Naive thymus-derived CD4-positive, alpha-beta T cell (primary cell): ENCODE measurements at regions of chr16 and their contacts with region 1.

Region 1: GRCh38 chr16:60729051-60729450 is 1307.2 kb downstream of the CDH8 start:
- DNase-seq: no peak
- ATAC-seq: no peak
- H3K4me3 ChIP-seq: no peak overlapping the region
- H3K4me3 Mint-ChIP-seq: no peak overlapping the region
- H3K27ac ChIP-seq: no peak overlapping the region
- H3K27ac Mint-ChIP-seq: no peak overlapping the region
- H3K4me1 ChIP-seq: no peaks in the 10 kb centered on the region
- H3K4me1 Mint-ChIP-seq: no peaks in the 10 kb centered on the region
- H3K27me3 ChIP-seq: no peaks in the 10 kb centered on the region
- H3K27me3 Mint-ChIP-seq: no peaks in the 10 kb centered on the region

Region 2: GRCh38 chr16:60655514-60656153 is 73.4 kb before region 1 on chr16:
- CTCF ChIA-PET with region 1: no interaction called
- POLR2A ChIA-PET with region 1: no interaction called
- intact Hi-C with region 1: loop called in 1 of 2 experiments (anchors 10 kb)
- DNase-seq: no peak
- ATAC-seq: no peak
- H3K4me3 ChIP-seq: no peak overlapping the region
- H3K4me3 Mint-ChIP-seq: no peak overlapping the region
- H3K27ac ChIP-seq: no peak overlapping the region
- H3K27ac Mint-ChIP-seq: no peak overlapping the region
- H3K4me1 ChIP-seq: no peaks in the 10 kb centered on the region
- H3K4me1 Mint-ChIP-seq: no peaks in the 10 kb centered on the region
- H3K27me3 ChIP-seq: no peaks in the 10 kb centered on the region
- H3K27me3 Mint-ChIP-seq: no peaks in the 10 kb centered on the region

Region 3: GRCh38 chr16:60811051-60811608 is 82.1 kb after region 1 on chr16:
- CTCF ChIA-PET with region 1: no interaction called
- POLR2A ChIA-PET with region 1: no interaction called
- intact Hi-C with region 1: no loop called
- DNase-seq: no peak
- ATAC-seq: no peak
- H3K4me3 ChIP-seq: no peak overlapping the region
- H3K4me3 Mint-ChIP-seq: no peak overlapping the region
- H3K27ac ChIP-seq: no peak overlapping the region
- H3K27ac Mint-ChIP-seq: no peak overlapping the region
- H3K4me1 ChIP-seq: no peaks in the 10 kb centered on the region
- H3K4me1 Mint-ChIP-seq: no peaks in the 10 kb centered on the region
- H3K27me3 ChIP-seq: no peaks in the 10 kb centered on the region
- H3K27me3 Mint-ChIP-seq: no peaks in the 10 kb centered on the region